Caco-2 (cell line): ENCODE measurements at regions of chr11 and their contacts with region 1.

Region 1: GRCh38 chr11:85595285-85595884 is 31.8 kb downstream of the DLG2 start:
- DNase-seq: peak in 1 of 2 experiments; percentile 62
- H3K4me3 ChIP-seq: no peak overlapping the region
- H3K4me3 Mint-ChIP-seq: no peak overlapping the region
- H3K27ac Mint-ChIP-seq: no peak overlapping the region
- H3K4me1 ChIP-seq: no peaks in the 10 kb centered on the region
- H3K4me1 Mint-ChIP-seq: peaks cover 6% of the 10 kb centered on the region
- H3K27me3 ChIP-seq: peaks cover 2% of the 10 kb centered on the region; the same call in 1 of the 2 replicates
- H3K27me3 Mint-ChIP-seq: peaks cover 4% of the 10 kb centered on the region
- CTCF ChIP-seq: peak; percentile 69 to 83

Region 2: GRCh38 chr11:84558085-84558905 is 1037.1 kb before region 1 on chr11:
- CTCF ChIA-PET with region 1: no interaction called
- POLR2A ChIA-PET with region 1: no interaction called
- intact Hi-C with region 1: loop called (anchors 2 kb)
- DNase-seq: peak; percentile 67 to 71
- H3K4me3 ChIP-seq: no peak overlapping the region
- H3K4me3 Mint-ChIP-seq: peak overlapping the region; percentile 63
- H3K27ac Mint-ChIP-seq: peak overlapping the region; percentile 7
- H3K4me1 ChIP-seq: peaks cover 16% of the 10 kb centered on the region
- H3K4me1 Mint-ChIP-seq: peaks cover 9% of the 10 kb centered on the region
- H3K27me3 ChIP-seq: no peaks in the 10 kb centered on the region
- H3K27me3 Mint-ChIP-seq: no peaks in the 10 kb centered on the region
- CTCF ChIP-seq: peak; percentile 96 to 99

Region 3: GRCh38 chr11:84800755-84801346 is 794.5 kb before region 1 on chr11:
- CTCF ChIA-PET with region 1: no interaction called
- POLR2A ChIA-PET with region 1: no interaction called
- intact Hi-C with region 1: loop called (anchors 1 kb)
- DNase-seq: peak; percentile 54 to 65
- H3K4me3 ChIP-seq: no peak overlapping the region
- H3K4me3 Mint-ChIP-seq: no peak overlapping the region
- H3K27ac Mint-ChIP-seq: no peak overlapping the region
- H3K4me1 ChIP-seq: no peaks in the 10 kb centered on the region
- H3K4me1 Mint-ChIP-seq: no peaks in the 10 kb centered on the region
- H3K27me3 ChIP-seq: no peaks in the 10 kb centered on the region; the same call in 1 of the 2 replicates
- H3K27me3 Mint-ChIP-seq: peaks cover 3% of the 10 kb centered on the region
- CTCF ChIP-seq: peak; percentile 63 to 77

Region 4: GRCh38 chr11:85647604-85648299 is 52.4 kb after region 1 on chr11 and contains the start of gene TMEM126A:
- CTCF ChIA-PET with region 1: no interaction called
- POLR2A ChIA-PET with region 1: no interaction called
- intact Hi-C with region 1: loop called (anchors 1 kb)
- DNase-seq: peak; percentile 99
- H3K4me3 ChIP-seq: peak within 1 kb of the TSS; percentile 49
- H3K4me3 Mint-ChIP-seq: peak within 1 kb of the TSS; percentile 81
- H3K27ac Mint-ChIP-seq: peak within 1 kb of the TSS; percentile 87
- H3K4me1 ChIP-seq: peaks cover 22% of the 10 kb centered on the region
- H3K4me1 Mint-ChIP-seq: peaks cover 36% of the 10 kb centered on the region
- H3K27me3 ChIP-seq: no peaks in the 10 kb centered on the region
- H3K27me3 Mint-ChIP-seq: no peaks in the 10 kb centered on the region
- CTCF ChIP-seq: no peak
- total RNA-seq, gene TMEM126A: 35.5 and 37.7 TPM in 2 replicates

Region 5: GRCh38 chr11:85810871-85811611 is 215.7 kb after region 1 on chr11 and contains the start of gene SYTL2:
- CTCF ChIA-PET with region 1: no interaction called
- POLR2A ChIA-PET with region 1: no interaction called
- intact Hi-C with region 1: loop called (anchors 5 kb)
- DNase-seq: peak; percentile 84 to 93
- H3K4me3 ChIP-seq: peak within 1 kb of the TSS; percentile 91
- H3K4me3 Mint-ChIP-seq: peak within 1 kb of the TSS; percentile 80
- H3K27ac Mint-ChIP-seq: peak within 1 kb of the TSS; percentile 44
- H3K4me1 ChIP-seq: peaks cover 29% of the 10 kb centered on the region
- H3K4me1 Mint-ChIP-seq: peaks cover 51% of the 10 kb centered on the region
- H3K27me3 ChIP-seq: no peaks in the 10 kb centered on the region
- H3K27me3 Mint-ChIP-seq: no peaks in the 10 kb centered on the region
- CTCF ChIP-seq: peak in 1 of 2 experiments; percentile 33
- total RNA-seq, gene SYTL2: 110 and 156 TPM in 2 replicates

Region 6: DNA sequence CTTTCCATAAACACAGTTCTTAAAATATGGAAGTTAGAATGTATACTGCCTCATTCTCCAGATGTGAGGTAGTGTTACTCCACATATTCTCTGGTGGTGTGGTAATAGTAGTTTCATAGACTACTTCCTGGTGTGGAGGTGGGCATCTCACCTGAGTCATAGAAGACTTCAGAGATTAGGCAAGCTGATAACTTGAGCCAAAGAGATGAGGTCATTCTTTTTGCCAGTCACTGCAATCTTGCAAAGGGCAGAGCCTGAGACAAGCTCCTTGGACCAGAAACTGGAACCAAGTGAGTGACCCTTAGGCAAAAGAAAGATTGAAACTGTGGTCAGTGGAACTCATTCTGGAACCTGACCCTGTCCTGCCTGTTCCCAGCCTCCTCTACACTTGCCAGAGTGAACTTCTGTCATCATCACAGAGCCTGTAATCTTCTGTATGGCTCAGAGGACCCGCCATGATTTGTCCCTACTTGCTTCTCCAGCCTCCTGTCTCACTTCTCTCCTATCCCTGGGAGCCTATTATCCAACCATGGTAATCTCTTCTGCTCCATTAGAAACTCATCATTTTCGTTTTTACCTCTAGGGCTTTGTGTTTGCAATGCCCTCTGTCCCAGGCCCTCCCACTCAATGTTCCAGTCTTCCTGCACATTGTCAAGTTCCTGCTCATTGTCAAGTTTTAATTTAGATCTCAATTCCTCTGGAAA is 249.2 kb after region 1 on chr11:
- CTCF ChIA-PET with region 1: no interaction called
- POLR2A ChIA-PET with region 1: no interaction called
- intact Hi-C with region 1: no loop called
- DNase-seq: peak; percentile 62 to 68
- H3K4me3 ChIP-seq: no peak overlapping the region
- H3K4me3 Mint-ChIP-seq: no peak overlapping the region
- H3K27ac Mint-ChIP-seq: no peak overlapping the region
- H3K4me1 ChIP-seq: peaks cover 14% of the 10 kb centered on the region; the same call in 1 of the 2 replicates
- H3K4me1 Mint-ChIP-seq: peaks cover 14% of the 10 kb centered on the region
- H3K27me3 ChIP-seq: no peaks in the 10 kb centered on the region
- H3K27me3 Mint-ChIP-seq: no peaks in the 10 kb centered on the region
- CTCF ChIP-seq: no peak

Region 7: GRCh38 chr11:86193297-86194095 is 598.1 kb after region 1 on chr11:
- CTCF ChIA-PET with region 1: no interaction called
- POLR2A ChIA-PET with region 1: no interaction called
- intact Hi-C with region 1: loop called (anchors 1 kb)
- DNase-seq: peak; percentile 84 to 86
- H3K4me3 ChIP-seq: no peak overlapping the region
- H3K4me3 Mint-ChIP-seq: peak overlapping the region; percentile 70
- H3K27ac Mint-ChIP-seq: peak overlapping the region; percentile 54
- H3K4me1 ChIP-seq: peaks cover 48% of the 10 kb centered on the region
- H3K4me1 Mint-ChIP-seq: peaks cover 27% of the 10 kb centered on the region
- H3K27me3 ChIP-seq: no peaks in the 10 kb centered on the region
- H3K27me3 Mint-ChIP-seq: no peaks in the 10 kb centered on the region
- CTCF ChIP-seq: peak; percentile 95